ENCODE measurements at regions of chr11 and their contacts with region 1.

Region 1: GRCh38 chr11:5123802-5124521 is 14.2 kb downstream of the OR52A5 start:
- DNase-seq: peak; percentile 66
- ATAC-seq: peak; percentile 95
- H3K4me3 ChIP-seq: no peak overlapping the region
- H3K27ac ChIP-seq: no peak overlapping the region
- H3K4me1 ChIP-seq: no peaks in the 10 kb centered on the region
- H3K27me3 ChIP-seq: no peaks in the 10 kb centered on the region
- CTCF ChIP-seq: peak; percentile 94

Region 2: DNA sequence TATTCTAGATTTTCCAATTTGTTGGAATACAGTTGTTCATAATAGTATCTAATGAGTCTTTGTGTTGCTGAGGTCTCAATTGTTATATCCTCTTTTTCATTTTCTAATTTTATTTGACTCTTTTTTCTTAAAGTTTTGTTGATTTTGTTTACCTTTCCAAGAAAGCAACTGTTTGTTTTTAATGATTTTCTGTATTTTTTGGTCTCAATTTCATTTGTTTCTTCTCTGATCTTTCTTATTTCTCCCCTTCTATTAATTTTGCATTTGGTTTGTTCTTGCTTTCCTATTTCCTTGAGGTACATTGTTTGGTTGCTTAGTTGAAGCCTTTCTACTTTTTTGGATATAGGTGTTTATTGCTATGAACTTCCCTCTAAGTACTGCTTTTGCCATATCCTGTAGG is 35.8 kb after region 1 on chr11:
- CTCF ChIA-PET with region 1: no interaction called
- POLR2A ChIA-PET with region 1: no interaction called
- in situ Hi-C with region 1: no loop called
- intact Hi-C with region 1: no loop called
- DNase-seq: no peak
- ATAC-seq: no peak
- H3K4me3 ChIP-seq: no peak overlapping the region
- H3K27ac ChIP-seq: no peak overlapping the region
- H3K4me1 ChIP-seq: no peaks in the 10 kb centered on the region
- H3K27me3 ChIP-seq: no peaks in the 10 kb centered on the region
- CTCF ChIP-seq: no peak

Region 3: GRCh38 chr11:5291207-5291838 is 167.4 kb after region 1 on chr11:
- CTCF ChIA-PET with region 1: no interaction called
- POLR2A ChIA-PET with region 1: no interaction called
- in situ Hi-C with region 1: no loop called
- intact Hi-C with region 1: loop called (anchors 2 kb)
- DNase-seq: peak; percentile 38
- ATAC-seq: peak; percentile 94
- H3K4me3 ChIP-seq: no peak overlapping the region
- H3K27ac ChIP-seq: no peak overlapping the region
- H3K4me1 ChIP-seq: no peaks in the 10 kb centered on the region
- H3K27me3 ChIP-seq: peaks cover 2% of the 10 kb centered on the region; the same call in 1 of the 2 replicates
- CTCF ChIP-seq: peak; percentile 81

Region 4: DNA sequence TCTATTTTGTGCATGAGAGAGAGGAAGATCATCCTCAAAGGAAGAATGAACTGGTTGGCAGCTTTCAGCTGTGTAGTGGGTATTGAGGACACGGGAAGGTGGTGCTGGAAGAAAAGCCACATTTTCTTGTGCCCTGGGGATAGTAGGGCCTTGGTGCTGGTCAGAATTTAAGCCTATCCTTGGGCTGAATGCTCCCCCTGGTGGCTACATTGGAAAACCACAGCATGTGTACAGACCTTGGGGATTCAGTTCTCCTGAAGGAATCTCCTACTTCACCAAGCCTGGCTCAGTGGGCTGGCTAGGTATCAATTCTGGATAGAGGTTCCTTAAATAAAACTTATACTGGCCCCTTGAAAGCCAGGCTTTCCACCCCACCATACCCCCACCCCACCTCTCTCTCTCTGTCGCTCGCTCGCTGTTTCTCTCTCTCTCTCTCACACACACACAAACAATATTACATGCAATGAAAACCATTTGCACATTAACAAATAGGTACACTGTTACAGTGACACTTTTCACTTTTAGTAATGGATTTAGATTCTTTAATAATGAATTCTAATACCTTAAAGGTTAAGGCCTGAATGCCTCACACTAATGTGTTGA is 256.9 kb after region 1 on chr11:
- CTCF ChIA-PET with region 1: no interaction called
- POLR2A ChIA-PET with region 1: no interaction called
- in situ Hi-C with region 1: no loop called
- intact Hi-C with region 1: loop called (anchors 2 kb)
- DNase-seq: peak; percentile 45
- ATAC-seq: peak; percentile 99
- H3K4me3 ChIP-seq: no peak overlapping the region
- H3K27ac ChIP-seq: no peak overlapping the region
- H3K4me1 ChIP-seq: no peaks in the 10 kb centered on the region
- H3K27me3 ChIP-seq: no peaks in the 10 kb centered on the region
- CTCF ChIP-seq: peak; percentile 88

Region 5: DNA sequence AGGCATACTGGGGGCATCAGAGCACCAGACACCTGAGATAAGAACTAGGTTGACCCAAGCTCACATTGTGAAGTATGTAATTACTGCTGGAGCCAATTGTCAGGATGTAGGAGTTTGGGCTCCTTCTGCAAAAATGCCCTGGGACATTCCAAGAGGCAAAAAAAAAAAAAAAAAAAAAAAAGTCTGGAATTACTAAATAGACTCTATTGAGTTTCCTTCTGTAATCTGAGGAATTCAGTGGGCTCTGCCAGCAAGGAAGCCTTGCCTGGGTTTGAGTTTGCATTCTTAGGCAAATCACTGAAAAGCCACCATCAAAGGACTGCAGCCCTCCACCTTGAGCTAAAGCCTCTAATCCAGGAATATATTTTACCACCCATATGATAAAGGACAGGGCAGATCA is 1204.4 kb after region 1 on chr11:
- CTCF ChIA-PET with region 1: interaction called, 10 read pairs
- POLR2A ChIA-PET with region 1: no interaction called
- in situ Hi-C with region 1: no loop called
- intact Hi-C with region 1: no loop called
- DNase-seq: no peak
- ATAC-seq: no peak
- H3K4me3 ChIP-seq: no peak overlapping the region
- H3K27ac ChIP-seq: no peak overlapping the region
- H3K4me1 ChIP-seq: no peaks in the 10 kb centered on the region
- H3K27me3 ChIP-seq: no peaks in the 10 kb centered on the region
- CTCF ChIP-seq: no peak

Measured in Panc1 (cell line).